Esophagus muscularis mucosa (tissue), 4 donors: ENCODE measurements at regions of chr10 and their contacts with region 1.

Region 1: DNA sequence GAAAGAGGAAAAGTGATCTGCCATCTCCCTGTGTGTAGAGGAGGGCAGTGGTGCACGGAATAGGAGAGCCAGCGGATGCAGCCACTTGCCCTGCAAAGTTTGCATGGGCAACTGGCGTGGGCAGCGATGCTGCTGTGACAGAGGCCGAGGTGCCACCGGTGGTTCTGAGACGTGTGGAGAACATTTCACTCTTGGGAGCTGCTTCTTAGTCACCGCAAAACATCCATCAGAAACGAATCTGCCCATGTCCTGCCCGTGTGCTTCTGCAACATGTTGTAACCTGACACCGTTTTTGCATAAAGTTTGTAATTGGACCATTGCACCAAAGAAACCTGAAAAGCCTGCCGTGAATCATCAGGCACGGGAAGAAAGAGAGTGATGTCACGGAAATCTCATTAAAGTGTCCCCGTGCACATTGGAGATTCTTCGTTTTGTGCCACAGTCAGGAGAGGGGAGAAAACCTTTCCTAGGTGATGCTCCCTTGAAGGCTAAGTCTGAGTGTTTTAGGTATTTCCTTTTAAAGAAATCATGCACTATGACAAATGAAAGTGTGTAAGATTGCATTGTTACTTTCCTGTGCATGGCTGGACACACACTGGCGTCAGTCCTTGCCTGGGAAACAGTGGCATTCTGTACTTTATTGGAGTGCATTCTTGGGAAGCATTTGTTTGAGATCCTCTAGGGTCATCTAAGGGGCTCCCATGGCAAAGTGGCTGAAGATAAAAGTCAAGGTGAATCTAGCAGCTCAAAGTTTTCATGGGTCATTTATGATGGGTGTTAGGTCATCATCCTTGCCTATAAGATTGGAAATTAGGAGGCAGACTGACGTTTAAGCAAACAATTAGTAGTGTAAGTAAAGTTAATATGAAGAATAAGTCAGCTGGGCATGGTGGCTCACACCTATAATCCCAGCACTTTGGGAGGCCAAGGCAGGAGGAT is 302.5 kb downstream of the KLF6 start:
- DNase-seq: no peak
- H3K4me3 ChIP-seq: peak overlapping the region in 3 of 4 donors; percentile 5 to 31 (median 20)
- H3K27ac ChIP-seq: peak overlapping the region; percentile 78 to 85 (median 82)
- H3K4me1 ChIP-seq: peaks cover 24 to 52% (median 43%) of the 10 kb centered on the region in 4 donors
- H3K27me3 ChIP-seq: no peaks in the 10 kb centered on the region
- CTCF ChIP-seq: peak in 1 of 3 experiments; percentile 4
- EP300 ChIP-seq: peak; percentile 79
- POLR2A ChIP-seq: no peak

Region 2: GRCh38 chr10:3740157-3740871 is 257.8 kb after region 1 on chr10:
- intact Hi-C with region 1: loop called (anchors 10 kb)
- DNase-seq: peak; percentile 34
- H3K4me3 ChIP-seq: no peak overlapping the region
- H3K27ac ChIP-seq: no peak overlapping the region
- H3K4me1 ChIP-seq: peaks cover 0 to 7% (median 3%) of the 10 kb centered on the region in 4 donors
- H3K27me3 ChIP-seq: no peaks in the 10 kb centered on the region
- CTCF ChIP-seq: no peak
- EP300 ChIP-seq: no peak
- POLR2A ChIP-seq: no peak